Posterior vena cava (tissue), 2 donors: ENCODE measurements at regions of chr3 and their contacts with region 1.

Region 1: DNA sequence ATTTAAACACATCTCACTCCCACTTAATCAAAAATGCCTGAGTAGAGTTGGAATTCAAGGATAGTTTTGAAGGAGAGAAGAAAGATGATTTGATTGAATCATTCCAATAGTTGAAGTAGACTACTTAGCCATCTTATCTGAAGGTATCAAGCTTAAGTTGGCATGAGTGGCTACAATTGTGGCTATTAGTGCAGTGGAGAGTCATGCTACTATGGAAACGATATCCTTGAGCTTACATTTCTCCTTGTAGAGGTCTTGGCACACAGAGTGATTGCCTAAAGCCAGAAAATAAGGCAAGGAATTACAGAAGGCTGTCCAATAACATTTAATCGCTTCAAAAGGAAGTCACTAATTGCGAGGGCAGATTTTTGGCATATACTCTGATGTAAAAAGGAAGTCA is 1022.7 kb downstream of the IGSF11 start:
- DNase-seq: no peak

Region 2: DNA sequence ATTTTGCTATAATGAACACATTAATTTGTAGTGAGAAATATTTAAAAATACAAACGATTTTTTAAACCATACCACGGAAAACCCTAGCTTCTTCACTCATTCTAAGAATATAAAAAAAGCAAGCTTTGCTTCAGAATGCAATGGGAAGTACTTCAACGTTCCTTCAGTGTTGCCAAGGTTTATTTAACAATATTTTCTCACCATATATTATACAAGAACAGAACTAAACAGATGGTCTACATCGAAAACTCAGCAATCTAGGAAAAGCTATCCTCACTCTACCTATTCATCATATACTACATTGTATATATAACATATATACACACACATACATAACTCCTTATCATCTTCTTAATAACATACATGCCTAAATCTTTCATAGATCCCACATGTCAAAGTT is 24.7 kb before region 1 on chr3:
- intact Hi-C with region 1: no loop called
- DNase-seq: no peak

Region 3: GRCh38 chr3:117997201-117998049 is 14.5 kb before region 1 on chr3:
- intact Hi-C with region 1: loop called in 1 of 2 experiments (anchors 1 kb)
- DNase-seq: peak; percentile 92